ENCODE measurements at regions of chr1 and their contacts with region 1.

Region 1: DNA sequence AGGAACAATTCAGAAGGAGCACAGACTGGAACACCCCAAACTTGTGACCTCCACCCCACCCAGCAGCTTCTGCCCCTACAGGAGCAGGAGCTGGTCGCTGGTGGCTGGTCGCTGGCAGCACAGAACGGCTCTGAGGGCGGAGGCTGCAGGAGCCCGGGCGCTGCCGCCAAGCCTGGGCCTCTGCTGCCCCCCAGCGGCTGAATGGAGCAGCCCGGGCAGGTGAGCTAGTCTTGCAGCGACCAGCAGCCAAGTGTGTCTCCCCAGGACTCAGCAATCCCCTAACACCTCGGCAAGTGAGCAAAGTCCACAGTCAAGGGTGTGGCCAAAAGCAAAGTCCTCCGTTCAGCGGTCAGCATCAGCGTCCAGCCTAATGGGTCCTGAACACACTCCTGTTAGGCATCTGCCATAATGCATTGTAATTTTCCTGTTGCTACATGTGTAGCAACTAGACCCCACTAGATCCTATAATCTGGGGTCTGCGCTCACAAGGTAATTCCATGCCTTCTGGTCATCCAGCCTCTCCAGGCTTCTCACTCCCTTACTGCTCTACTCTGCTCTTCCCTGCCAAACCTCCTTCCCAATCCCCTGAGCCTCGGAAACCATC is 12.1 kb upstream of the GJB5 start:
- DNase-seq: peak; percentile 2
- ATAC-seq: peak; percentile 100
- H3K4me3 ChIP-seq: no peak overlapping the region
- H3K27ac ChIP-seq: no peak overlapping the region
- H3K4me1 ChIP-seq: no peaks in the 10 kb centered on the region
- H3K27me3 ChIP-seq: no peaks in the 10 kb centered on the region; a peak in 1 of 4 replicates
- CTCF ChIP-seq: peak; percentile 94 to 99 (median 94)
- EP300 ChIP-seq: no peak
- POLR2A ChIP-seq: no peak
- RAD21 ChIP-seq: peak; percentile 74

Region 2: GRCh38 chr1:34070196-34070836 is 672.5 kb before region 1 on chr1:
- CTCF ChIA-PET with region 1: no interaction called
- POLR2A ChIA-PET with region 1: no interaction called
- RAD21 ChIA-PET with region 1: no interaction called
- SMC1A ChIA-PET with region 1: no interaction called
- in situ Hi-C with region 1: no loop called
- intact Hi-C with region 1: no loop called
- DNase-seq: no peak
- ATAC-seq: no peak
- H3K4me3 ChIP-seq: no peak overlapping the region
- H3K27ac ChIP-seq: no peak overlapping the region
- H3K4me1 ChIP-seq: no peaks in the 10 kb centered on the region
- H3K27me3 ChIP-seq: no peaks in the 10 kb centered on the region; a peak in 1 of 4 replicates
- CTCF ChIP-seq: no peak
- EP300 ChIP-seq: no peak
- POLR2A ChIP-seq: no peak
- RAD21 ChIP-seq: no peak

Region 3: GRCh38 chr1:34726861-34727260 is 15.9 kb before region 1 on chr1:
- CTCF ChIA-PET with region 1: interaction called, 17 read pairs
- POLR2A ChIA-PET with region 1: no interaction called
- RAD21 ChIA-PET with region 1: no interaction called
- SMC1A ChIA-PET with region 1: no interaction called
- in situ Hi-C with region 1: no loop called
- intact Hi-C with region 1: no loop called
- DNase-seq: no peak
- ATAC-seq: no peak
- H3K4me3 ChIP-seq: no peak overlapping the region
- H3K27ac ChIP-seq: no peak overlapping the region
- H3K4me1 ChIP-seq: no peaks in the 10 kb centered on the region
- H3K27me3 ChIP-seq: peaks cover 0 to 1% of the 10 kb centered on the region in 2 experiments; a peak in 2 of 4 replicates
- CTCF ChIP-seq: no peak
- EP300 ChIP-seq: no peak
- POLR2A ChIP-seq: no peak
- RAD21 ChIP-seq: no peak

Region 4: GRCh38 chr1:34753163-34753562 is 10.4 kb after region 1 on chr1:
- CTCF ChIA-PET with region 1: interaction called, 16 read pairs
- POLR2A ChIA-PET with region 1: no interaction called
- RAD21 ChIA-PET with region 1: no interaction called
- SMC1A ChIA-PET with region 1: interaction called, 11 read pairs
- in situ Hi-C with region 1: no loop called
- intact Hi-C with region 1: no loop called
- DNase-seq: no peak
- ATAC-seq: no peak
- H3K4me3 ChIP-seq: no peak overlapping the region
- H3K27ac ChIP-seq: no peak overlapping the region
- H3K4me1 ChIP-seq: no peaks in the 10 kb centered on the region
- H3K27me3 ChIP-seq: no peaks in the 10 kb centered on the region; a peak in 2 of 4 replicates
- CTCF ChIP-seq: 0 out of 6 replicates have a peak, but pooled peaks of 1 of the 3 experiments have one; percentile 1
- EP300 ChIP-seq: no peak
- POLR2A ChIP-seq: no peak
- RAD21 ChIP-seq: no peak

Region 5: GRCh38 chr1:34859446-34860200 is 116.9 kb after region 1 on chr1 and contains the start of gene SMIM12:
- CTCF ChIA-PET with region 1: no interaction called
- POLR2A ChIA-PET with region 1: no interaction called
- RAD21 ChIA-PET with region 1: no interaction called
- SMC1A ChIA-PET with region 1: no interaction called
- in situ Hi-C with region 1: no loop called
- intact Hi-C with region 1: no loop called
- DNase-seq: peak; percentile 62
- ATAC-seq: peak; percentile 100
- H3K4me3 ChIP-seq: peak within 1 kb of the TSS; percentile 96
- H3K27ac ChIP-seq: peak within 1 kb of the TSS; percentile 81
- H3K4me1 ChIP-seq: no peaks in the 10 kb centered on the region
- H3K27me3 ChIP-seq: no peaks in the 10 kb centered on the region
- CTCF ChIP-seq: peak; percentile 84 to 93 (median 92)
- EP300 ChIP-seq: peak in 1 of 2 experiments; percentile 30; a peak in 1 of 4 replicates
- POLR2A ChIP-seq: peak; percentile 100
- RAD21 ChIP-seq: no peak
- polyA plus RNA-seq, gene SMIM12: 26.1 to 42.9 TPM

Region 6: GRCh38 chr1:35192853-35193664 is 450.3 kb after region 1 on chr1 and contains the start of gene SFPQ:
- CTCF ChIA-PET with region 1: no interaction called
- POLR2A ChIA-PET with region 1: no interaction called
- RAD21 ChIA-PET with region 1: no interaction called
- SMC1A ChIA-PET with region 1: no interaction called
- in situ Hi-C with region 1: no loop called
- intact Hi-C with region 1: no loop called
- DNase-seq: peak; percentile 97
- ATAC-seq: peak; percentile 93
- H3K4me3 ChIP-seq: peak within 1 kb of the TSS; percentile 80
- H3K27ac ChIP-seq: peak within 1 kb of the TSS; percentile 94
- H3K4me1 ChIP-seq: no peaks in the 10 kb centered on the region
- H3K27me3 ChIP-seq: no peaks in the 10 kb centered on the region
- CTCF ChIP-seq: no peak
- EP300 ChIP-seq: no peak
- POLR2A ChIP-seq: peak; percentile 98
- RAD21 ChIP-seq: no peak
- polyA plus RNA-seq, gene SFPQ: 78.5 to 117 TPM